ENCODE measurements at regions of chr2 and their contacts with region 1.

Region 1: DNA sequence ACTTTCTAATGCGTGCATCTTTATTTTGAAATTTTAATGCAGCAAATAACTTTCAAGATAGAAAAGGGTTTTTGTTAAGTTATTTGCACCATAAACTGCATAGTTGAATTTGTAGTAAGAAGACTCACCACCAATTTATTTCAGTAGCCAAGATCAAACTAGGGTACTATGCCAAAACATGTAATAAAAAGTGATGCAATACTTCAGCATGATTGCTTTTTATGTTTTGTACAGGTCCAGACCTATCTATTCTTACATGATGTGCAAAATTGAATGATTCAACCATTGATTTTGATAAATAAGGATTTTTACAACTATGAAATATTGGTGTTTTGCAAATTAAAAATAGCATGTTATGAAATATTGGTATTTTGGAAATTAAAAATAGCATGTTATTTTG is 26.7 kb downstream of the AGPS start:
- DNase-seq: no peak
- H3K4me3 ChIP-seq: no peak overlapping the region
- H3K27ac ChIP-seq: no peak overlapping the region
- H3K27me3 ChIP-seq: no peaks in the 10 kb centered on the region
- CTCF ChIP-seq: no peak

Region 2: GRCh38 chr2:177148477-177149154 is 270.7 kb before region 1 on chr2:
- CTCF ChIA-PET with region 1: interaction called, 16 read pairs
- POLR2A ChIA-PET with region 1: no interaction called
- DNase-seq: no peak
- H3K4me3 ChIP-seq: peak overlapping the region; percentile 61
- H3K27ac ChIP-seq: no peak overlapping the region
- H3K27me3 ChIP-seq: peaks cover 16% of the 10 kb centered on the region
- CTCF ChIP-seq: peak; percentile 97

Region 3: DNA sequence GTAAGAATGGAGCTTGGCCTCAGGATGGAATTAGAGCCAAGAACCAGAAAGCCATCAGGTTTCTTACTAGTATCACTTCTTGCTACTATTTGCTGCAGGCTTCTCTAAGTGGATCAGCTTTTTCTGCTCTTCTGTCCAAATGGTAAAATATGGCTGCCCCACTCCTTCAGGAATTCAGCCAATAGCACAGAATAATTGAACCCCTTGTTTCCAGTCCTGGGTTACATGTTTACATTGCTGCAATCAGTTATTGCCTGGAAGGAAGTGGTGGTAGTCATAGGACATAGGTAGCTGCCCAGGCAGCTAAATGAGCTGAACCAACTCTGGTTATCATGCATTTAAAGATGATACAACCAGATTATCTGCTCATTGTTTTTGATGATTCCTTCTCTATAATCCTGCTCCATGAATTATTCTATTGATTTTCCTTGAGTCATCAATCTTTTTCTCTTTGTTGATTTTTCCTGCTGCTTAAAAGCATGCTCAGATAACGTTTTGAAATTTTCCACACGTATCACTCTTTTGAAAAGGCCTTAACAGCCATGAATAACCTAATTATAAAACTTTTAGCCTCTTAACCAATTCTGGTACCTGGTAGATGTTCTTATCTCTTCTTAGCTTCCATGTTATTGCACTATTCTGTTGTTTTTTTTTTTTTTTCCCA is 14.1 kb before region 1 on chr2:
- CTCF ChIA-PET with region 1: interaction called, 22 read pairs
- POLR2A ChIA-PET with region 1: no interaction called
- DNase-seq: no peak
- H3K4me3 ChIP-seq: no peak overlapping the region
- H3K27ac ChIP-seq: no peak overlapping the region
- H3K27me3 ChIP-seq: no peaks in the 10 kb centered on the region
- CTCF ChIP-seq: no peak

Region 4: GRCh38 chr2:177568390-177568789 is 149.1 kb after region 1 on chr2:
- CTCF ChIA-PET with region 1: no interaction called
- POLR2A ChIA-PET with region 1: no interaction called
- DNase-seq: no peak
- H3K4me3 ChIP-seq: no peak overlapping the region
- H3K27ac ChIP-seq: no peak overlapping the region
- H3K27me3 ChIP-seq: no peaks in the 10 kb centered on the region
- CTCF ChIP-seq: no peak

Measured in AG04450 (cell line).